Activated CD4-positive, alpha-beta T cell treated with anti-CD3 and anti-CD28 coated beads, Interleukin-2, amount 10 ng/mL, durations not matched to agents 24 days and 14 days (primary cell): ENCODE measurements at regions of chr15 and their contacts with region 1.

Region 1: GRCh38 chr15:50354838-50355618 is at the start of gene GABPB1:
- DNase-seq: peak; percentile 97
- H3K4me3 Mint-ChIP-seq: peak within 1 kb of the TSS; percentile 92
- H3K27ac Mint-ChIP-seq: peak within 1 kb of the TSS; percentile 100
- H3K4me1 Mint-ChIP-seq: peaks cover 42% of the 10 kb centered on the region
- H3K27me3 Mint-ChIP-seq: peaks cover 2% of the 10 kb centered on the region
- total RNA-seq, gene GABPB1: 78.3 and 79.5 TPM in 2 replicates

Region 2: GRCh38 chr15:49155110-49155833 is 1199.8 kb before region 1 on chr15 and contains the start of gene COPS2:
- intact Hi-C with region 1: loop called (anchors 10 kb)
- DNase-seq: peak; percentile 98
- H3K4me3 Mint-ChIP-seq: peak within 1 kb of the TSS; percentile 99
- H3K27ac Mint-ChIP-seq: peak within 1 kb of the TSS; percentile 99
- H3K4me1 Mint-ChIP-seq: peaks cover 40% of the 10 kb centered on the region
- H3K27me3 Mint-ChIP-seq: peaks cover 1% of the 10 kb centered on the region
- total RNA-seq, gene COPS2: 98.6 and 99.0 TPM in 2 replicates

Region 3: GRCh38 chr15:50134520-50135024 is 220.5 kb before region 1 on chr15:
- intact Hi-C with region 1: loop called (anchors 1 kb)
- DNase-seq: peak; percentile 67
- H3K4me3 Mint-ChIP-seq: peak overlapping the region; percentile 63
- H3K27ac Mint-ChIP-seq: peak overlapping the region; percentile 95
- H3K4me1 Mint-ChIP-seq: peaks cover 52% of the 10 kb centered on the region
- H3K27me3 Mint-ChIP-seq: peaks cover 2% of the 10 kb centered on the region

Region 4: GRCh38 chr15:50330921-50331320 is 24.1 kb before region 1 on chr15:
- intact Hi-C with region 1: loop called (anchors 2 kb)
- DNase-seq: peak; percentile 54
- H3K4me3 Mint-ChIP-seq: no peak overlapping the region
- H3K27ac Mint-ChIP-seq: peak overlapping the region; percentile 36
- H3K4me1 Mint-ChIP-seq: peaks cover 26% of the 10 kb centered on the region
- H3K27me3 Mint-ChIP-seq: no peaks in the 10 kb centered on the region

Region 5: GRCh38 chr15:50344006-50344464 is 11.0 kb before region 1 on chr15:
- intact Hi-C with region 1: no loop called
- DNase-seq: no peak
- H3K4me3 Mint-ChIP-seq: no peak overlapping the region
- H3K27ac Mint-ChIP-seq: no peak overlapping the region
- H3K4me1 Mint-ChIP-seq: peaks cover 12% of the 10 kb centered on the region
- H3K27me3 Mint-ChIP-seq: no peaks in the 10 kb centered on the region

Region 6: DNA sequence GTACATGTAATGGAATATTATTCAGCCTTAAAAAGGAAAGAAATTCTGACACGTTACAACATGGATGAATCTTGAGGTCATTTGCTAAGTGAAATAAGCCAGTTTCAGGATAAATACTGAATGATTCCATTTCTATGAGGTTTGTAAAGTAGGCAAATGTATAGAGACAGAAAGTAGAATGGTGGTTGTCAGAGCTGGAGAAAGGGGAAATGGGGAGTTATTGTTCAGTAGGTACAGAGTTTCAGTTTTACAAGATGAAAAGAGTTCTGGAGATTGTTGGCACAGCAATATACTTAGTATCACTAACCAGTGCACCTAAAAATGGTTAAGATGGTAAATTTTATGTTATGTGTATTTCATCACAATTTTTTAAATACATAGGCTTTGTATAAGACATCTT is 129.8 kb after region 1 on chr15:
- intact Hi-C with region 1: loop called (anchors 1 kb)
- DNase-seq: no peak
- H3K4me3 Mint-ChIP-seq: no peak overlapping the region
- H3K27ac Mint-ChIP-seq: peak overlapping the region; percentile 72
- H3K4me1 Mint-ChIP-seq: peaks cover 28% of the 10 kb centered on the region
- H3K27me3 Mint-ChIP-seq: no peaks in the 10 kb centered on the region

Region 7: GRCh38 chr15:50908210-50909009 is 553.4 kb after region 1 on chr15 and contains the start of gene AP4E1:
- intact Hi-C with region 1: loop called (anchors 1 kb)
- DNase-seq: peak; percentile 98
- H3K4me3 Mint-ChIP-seq: peak within 1 kb of the TSS; percentile 87
- H3K27ac Mint-ChIP-seq: peak within 1 kb of the TSS; percentile 97
- H3K4me1 Mint-ChIP-seq: peaks cover 16% of the 10 kb centered on the region
- H3K27me3 Mint-ChIP-seq: no peaks in the 10 kb centered on the region
- total RNA-seq, gene AP4E1: 16.5 TPM in 2 replicates